Ovary (tissue), 10 donors: ENCODE measurements at regions of chr3 and their contacts with region 1.

Region 1: GRCh38 chr3:48556793-48557626 is at the start of gene PFKFB4:
- DNase-seq: peak; percentile 98 to 99 (median 99)
- H3K4me3 ChIP-seq: peak within 1 kb of the TSS; percentile 56
- H3K27ac ChIP-seq: no peak within 1 kb of the TSS
- H3K4me1 ChIP-seq: peaks cover 10% of the 10 kb centered on the region
- H3K27me3 ChIP-seq: no peaks in the 10 kb centered on the region
- CTCF ChIP-seq: peak in 2 of 3 donors; percentile 14 to 24
- EP300 ChIP-seq: no peak
- POLR2A ChIP-seq: no peak
- total RNA-seq, gene PFKFB4: 3.3 to 8.0 (median 5.6) TPM

Region 2: DNA sequence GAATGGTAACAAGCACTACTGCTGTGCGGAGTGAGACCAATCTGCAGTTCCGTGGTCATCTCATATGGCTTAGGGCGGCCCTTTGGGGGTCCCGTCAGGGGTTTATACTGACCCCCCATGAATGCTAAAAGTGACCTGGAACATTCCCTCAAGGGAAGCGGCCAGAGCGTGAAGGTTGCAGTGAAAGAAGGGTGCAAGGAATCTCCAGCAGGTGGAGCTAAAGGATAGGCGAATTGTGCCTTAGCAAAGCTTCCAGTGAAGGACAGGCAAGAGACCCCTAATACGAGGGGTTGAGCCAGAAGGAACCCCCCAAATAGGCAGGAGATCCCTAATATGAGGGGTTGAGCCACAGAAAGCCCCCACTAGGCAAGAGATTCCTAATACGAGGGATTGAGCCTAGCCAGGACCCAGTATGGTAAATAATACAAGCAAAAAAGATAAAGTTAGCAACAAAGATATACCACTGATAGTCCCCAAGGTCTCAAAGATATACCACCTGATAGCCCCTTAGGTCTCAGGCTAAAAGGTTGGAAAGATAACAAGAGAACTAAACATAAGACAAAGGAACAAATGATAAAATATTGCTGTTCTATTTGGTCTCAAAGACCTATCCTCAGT is 283.3 kb before region 1 on chr3:
- intact Hi-C with region 1: loop called in 2 of 4 experiments (anchors 5 to 10 kb)
- DNase-seq: peak; percentile 34 to 52 (median 43)
- H3K4me3 ChIP-seq: no peak overlapping the region
- H3K27ac ChIP-seq: no peak overlapping the region
- H3K4me1 ChIP-seq: no peaks in the 10 kb centered on the region
- H3K27me3 ChIP-seq: no peaks in the 10 kb centered on the region
- CTCF ChIP-seq: peak; percentile 25 to 60 (median 60)
- EP300 ChIP-seq: no peak
- POLR2A ChIP-seq: no peak

Region 3: DNA sequence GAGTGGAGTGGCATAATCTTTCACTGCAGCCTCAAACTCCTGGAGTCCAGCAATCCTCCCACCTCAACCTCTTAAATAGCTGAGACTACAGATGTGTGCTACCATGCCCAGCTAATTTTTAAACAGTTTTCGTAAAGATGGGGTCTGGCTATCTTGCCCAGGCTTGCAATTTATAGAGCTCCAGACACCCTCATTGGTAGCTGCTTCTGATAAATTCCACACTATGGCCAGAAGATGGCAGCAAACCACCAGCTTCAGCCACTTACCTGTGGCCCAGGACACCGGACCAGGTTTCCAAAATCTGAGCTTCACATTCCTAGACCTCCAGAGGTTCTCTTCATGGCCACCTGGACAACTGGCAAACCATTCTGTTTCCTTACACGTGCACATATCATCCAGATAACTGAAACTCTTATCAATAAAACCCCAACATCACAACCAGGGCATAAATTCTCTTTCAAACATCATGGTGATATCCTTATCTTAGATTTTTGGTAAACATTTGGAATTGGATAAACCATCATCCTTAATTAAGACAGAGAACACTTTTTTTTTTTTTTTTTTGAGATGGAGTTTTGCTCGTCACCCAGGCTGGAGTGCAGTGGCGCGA is 156.1 kb before region 1 on chr3:
- intact Hi-C with region 1: loop called in 2 of 4 experiments (anchors 5 to 10 kb)
- DNase-seq: peak; percentile 51 to 67 (median 56)
- H3K4me3 ChIP-seq: no peak overlapping the region
- H3K27ac ChIP-seq: no peak overlapping the region
- H3K4me1 ChIP-seq: peaks cover 2% of the 10 kb centered on the region
- H3K27me3 ChIP-seq: no peaks in the 10 kb centered on the region
- CTCF ChIP-seq: peak; percentile 66 to 89 (median 81)
- EP300 ChIP-seq: no peak
- POLR2A ChIP-seq: no peak

Region 4: GRCh38 chr3:48609088-48610005 is 52.3 kb after region 1 on chr3 and contains the start of gene UQCRC1:
- intact Hi-C with region 1: loop called in 1 of 4 experiments (anchors 5 kb)
- DNase-seq: peak; percentile 90 to 96 (median 93)
- H3K4me3 ChIP-seq: peak within 1 kb of the TSS; percentile 70
- H3K27ac ChIP-seq: peak within 1 kb of the TSS; percentile 74
- H3K4me1 ChIP-seq: peaks cover 5% of the 10 kb centered on the region
- H3K27me3 ChIP-seq: no peaks in the 10 kb centered on the region
- CTCF ChIP-seq: peak; percentile 72 to 95 (median 94)
- EP300 ChIP-seq: no peak
- POLR2A ChIP-seq: peak; percentile 84
- total RNA-seq, gene UQCRC1: 102 to 153 (median 113) TPM